ENCODE measurements at regions of chr9 and their contacts with region 1.

Region 1: DNA sequence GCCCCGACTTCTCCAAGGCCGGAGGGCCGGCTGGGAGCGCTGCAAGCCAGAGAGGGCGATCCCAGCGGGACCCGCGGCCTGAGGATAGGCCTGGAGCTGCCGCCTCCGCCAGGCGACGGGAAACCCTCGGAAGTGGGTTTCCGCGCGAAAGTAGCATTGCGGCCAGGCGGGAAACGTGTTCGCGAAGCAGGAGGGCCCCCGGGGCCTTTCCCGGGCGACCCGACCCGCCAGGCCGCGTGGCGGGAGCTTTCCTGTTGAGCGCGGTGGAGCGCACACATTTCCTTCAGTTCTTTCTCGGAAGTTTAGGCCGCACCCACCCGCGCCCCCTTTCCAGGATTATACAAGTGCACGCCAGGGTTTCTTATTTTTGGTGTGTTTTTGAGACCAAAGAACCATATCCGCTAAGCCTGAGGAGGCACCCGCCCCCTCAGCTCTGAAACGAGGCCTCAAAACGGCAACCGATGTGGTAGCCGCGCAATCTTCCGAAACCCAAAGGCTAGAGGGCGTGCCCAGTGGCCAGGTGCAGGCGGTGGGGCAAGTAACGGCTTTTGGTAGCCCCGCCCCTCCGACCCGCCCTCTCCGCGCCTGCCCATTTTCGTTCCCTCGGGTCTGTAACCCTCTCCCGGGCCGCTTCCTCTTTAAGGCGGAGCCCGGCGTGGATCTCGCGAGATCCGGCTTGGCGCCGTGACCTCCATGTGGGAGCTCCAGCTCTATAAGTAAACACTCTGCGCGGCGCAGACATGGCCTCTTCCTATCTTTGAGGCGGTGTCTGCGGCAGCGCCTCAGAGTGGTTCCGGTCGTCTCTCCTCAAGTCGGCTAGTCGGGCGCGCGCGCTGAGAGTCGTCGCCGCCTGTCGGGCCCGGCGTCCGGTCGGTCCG is at the start of gene UHRF2:
- DNase-seq: peak; percentile 97 to 99
- H3K4me3 ChIP-seq: peak within 1 kb of the TSS; percentile 97 to 98
- H3K27ac ChIP-seq: peak within 1 kb of the TSS; percentile 86 to 92
- H3K4me1 ChIP-seq: peaks cover 6% of the 10 kb centered on the region in 2 donors
- H3K27me3 ChIP-seq: no peaks in the 10 kb centered on the region
- CTCF ChIP-seq: peak in 1 of 3 experiments; percentile 21
- total RNA-seq, gene UHRF2: 22.8 TPM

Region 2: GRCh38 chr9:6215562-6215961 is 197.2 kb before region 1 on chr9 and contains the start of gene IL33:
- intact Hi-C with region 1: loop called (anchors 10 kb)
- DNase-seq: no peak
- H3K4me3 ChIP-seq: peak within 1 kb of the TSS; percentile 44 to 53
- H3K27ac ChIP-seq: peak within 1 kb of the TSS; percentile 41 to 77
- H3K4me1 ChIP-seq: peaks cover 0 to 19% of the 10 kb centered on the region in 2 donors
- H3K27me3 ChIP-seq: no peaks in the 10 kb centered on the region
- CTCF ChIP-seq: no peak
- total RNA-seq, gene IL33: 38.0 TPM

Region 3: DNA sequence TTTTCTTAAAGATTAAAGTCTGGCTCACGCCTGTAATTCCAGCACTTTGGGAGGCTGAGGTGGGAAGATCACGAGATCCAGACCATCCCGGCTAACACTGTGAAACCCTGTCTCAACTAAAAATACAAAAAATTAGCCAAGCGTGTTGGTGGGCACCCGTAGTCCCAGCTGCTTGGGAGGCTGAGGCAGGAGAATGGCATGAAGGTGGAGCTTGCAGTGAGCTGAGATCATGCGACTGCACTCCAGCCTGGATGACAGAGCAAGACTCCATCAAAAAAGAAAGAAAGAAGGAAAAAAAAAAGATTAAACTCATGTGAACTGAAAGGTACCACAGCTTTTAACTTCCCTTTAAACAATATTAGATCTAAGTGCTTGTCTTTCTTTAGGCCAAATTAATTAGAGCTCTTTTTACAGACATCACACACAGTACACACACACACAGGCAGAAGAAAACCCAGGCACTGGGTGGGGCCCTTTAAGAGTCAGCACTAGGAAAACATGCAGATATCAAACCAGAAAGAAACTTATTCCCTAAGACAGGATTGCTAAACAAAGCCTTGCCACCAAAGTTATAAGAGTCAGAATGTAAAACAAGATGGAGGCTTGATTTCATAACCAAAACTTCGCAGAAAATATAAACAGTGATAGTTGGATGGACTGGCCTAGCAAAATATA is 29.0 kb before region 1 on chr9:
- intact Hi-C with region 1: loop called (anchors 1 kb)
- DNase-seq: peak in 1 of 2 donors; percentile 65
- H3K4me3 ChIP-seq: no peak overlapping the region
- H3K27ac ChIP-seq: peak overlapping the region; percentile 73 to 74
- H3K4me1 ChIP-seq: peaks cover 4 to 5% of the 10 kb centered on the region in 2 donors
- H3K27me3 ChIP-seq: no peaks in the 10 kb centered on the region
- CTCF ChIP-seq: no peak

Region 4: GRCh38 chr9:6681147-6681956 is 268.6 kb after region 1 on chr9:
- intact Hi-C with region 1: loop called (anchors 2 kb)
- DNase-seq: peak; percentile 90 to 98
- H3K4me3 ChIP-seq: peak overlapping the region; percentile 71 to 72
- H3K27ac ChIP-seq: peak overlapping the region; percentile 95 to 96
- H3K4me1 ChIP-seq: peaks cover 0 to 10% of the 10 kb centered on the region in 2 donors
- H3K27me3 ChIP-seq: no peaks in the 10 kb centered on the region
- CTCF ChIP-seq: peak in 1 of 3 experiments; percentile 6

Region 5: GRCh38 chr9:7489036-7489435 is 1076.3 kb after region 1 on chr9:
- intact Hi-C with region 1: no loop called
- DNase-seq: no peak
- H3K4me3 ChIP-seq: no peak overlapping the region
- H3K27ac ChIP-seq: no peak overlapping the region
- H3K4me1 ChIP-seq: no peaks in the 10 kb centered on the region
- H3K27me3 ChIP-seq: no peaks in the 10 kb centered on the region
- CTCF ChIP-seq: no peak